Cardiac septum (tissue), 1 donor: ENCODE measurements at regions of chr6 and their contacts with region 1.

Region 1: GRCh38 chr6:15399641-15400470 is 154.0 kb downstream of the JARID2 start:
- DNase-seq: peak; percentile 82

Region 2: DNA sequence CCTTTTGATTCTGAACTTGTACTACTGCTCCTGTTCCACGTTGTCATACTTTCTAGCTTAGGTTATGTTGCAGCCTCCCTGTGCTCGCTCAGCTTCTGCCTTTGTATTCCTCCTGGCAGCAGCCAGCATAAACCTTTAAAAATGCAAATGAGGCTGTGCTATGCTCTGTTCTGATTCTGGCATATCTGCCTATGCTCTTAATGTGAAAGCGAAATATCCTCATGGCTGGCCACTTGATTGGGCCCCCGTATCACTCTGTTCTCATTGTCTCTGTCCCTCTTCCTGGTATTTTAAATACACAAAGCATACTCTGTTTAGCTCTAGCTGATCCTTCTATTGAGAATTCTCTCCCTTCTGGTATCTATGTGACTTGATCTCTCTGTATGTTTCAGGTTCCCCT is 15.0 kb before region 1 on chr6:
- intact Hi-C with region 1: no loop called
- DNase-seq: no peak

Region 3: DNA sequence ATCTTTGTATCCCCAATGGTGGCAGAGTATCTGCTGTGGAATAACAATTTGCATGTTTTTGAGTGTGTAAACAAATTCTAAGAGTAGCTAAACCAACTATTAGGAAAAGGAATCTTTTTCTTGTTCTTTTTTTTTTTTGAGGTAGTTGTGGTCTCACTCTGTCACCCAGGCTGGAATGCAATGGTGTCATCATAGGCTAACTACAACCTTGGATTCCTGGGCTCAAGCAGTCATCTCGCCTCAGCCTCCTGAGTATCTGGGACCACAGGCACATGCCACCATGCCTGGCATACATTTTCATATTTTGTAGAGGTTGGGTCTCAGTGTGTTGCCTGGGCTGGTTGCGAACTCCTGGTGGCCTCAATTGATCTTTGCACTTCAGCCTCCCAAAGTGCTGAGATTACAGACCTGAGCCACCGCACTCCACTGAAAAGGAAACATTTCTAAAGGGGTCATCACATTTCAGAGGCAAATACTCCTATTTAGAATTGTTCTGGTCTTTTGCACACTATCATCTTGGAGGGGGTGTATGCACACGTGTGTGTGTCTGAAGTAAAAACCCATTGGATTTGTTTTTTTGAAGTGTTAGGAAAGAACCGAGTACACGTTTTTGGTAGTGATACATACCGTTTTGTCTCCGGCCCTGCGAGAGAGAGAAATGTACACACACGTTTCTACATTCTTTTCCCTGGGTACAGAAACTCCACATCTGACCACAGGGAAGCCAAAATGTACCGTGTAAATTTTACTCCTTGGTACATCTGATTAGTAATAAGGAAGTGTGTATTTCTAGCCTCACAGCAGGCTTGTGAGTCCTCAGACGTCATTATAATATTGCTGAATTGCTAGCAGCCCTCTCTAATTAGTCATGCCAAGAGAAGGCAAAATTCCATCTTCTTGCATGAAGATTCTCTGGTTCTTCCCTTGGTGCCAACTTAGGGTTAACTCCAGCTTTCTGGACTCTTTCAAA is 29.6 kb after region 1 on chr6:
- intact Hi-C with region 1: loop called (anchors 2 kb)
- DNase-seq: no peak